Heart right ventricle (tissue), 16 donors: ENCODE measurements at regions of chr22 and their contacts with region 1.

Region 1: GRCh38 chr22:26658671-26659478 is 1.5 kb downstream of the MIAT start:
- DNase-seq: no peak
- ATAC-seq: peak; percentile 20 to 61 (median 44)
- H3K4me3 ChIP-seq: peak overlapping the region in 8 of 10 donors; percentile 2 to 50 (median 30)
- H3K27ac ChIP-seq: peak overlapping the region in 1 of 10 donors; percentile 62
- H3K4me1 ChIP-seq: peaks cover 8 to 27% (median 22%) of the 10 kb centered on the region in 9 donors
- H3K27me3 ChIP-seq: peaks cover 0 to 90% (median 74%) of the 10 kb centered on the region in 7 donors
- CTCF ChIP-seq: no peak

Region 2: DNA sequence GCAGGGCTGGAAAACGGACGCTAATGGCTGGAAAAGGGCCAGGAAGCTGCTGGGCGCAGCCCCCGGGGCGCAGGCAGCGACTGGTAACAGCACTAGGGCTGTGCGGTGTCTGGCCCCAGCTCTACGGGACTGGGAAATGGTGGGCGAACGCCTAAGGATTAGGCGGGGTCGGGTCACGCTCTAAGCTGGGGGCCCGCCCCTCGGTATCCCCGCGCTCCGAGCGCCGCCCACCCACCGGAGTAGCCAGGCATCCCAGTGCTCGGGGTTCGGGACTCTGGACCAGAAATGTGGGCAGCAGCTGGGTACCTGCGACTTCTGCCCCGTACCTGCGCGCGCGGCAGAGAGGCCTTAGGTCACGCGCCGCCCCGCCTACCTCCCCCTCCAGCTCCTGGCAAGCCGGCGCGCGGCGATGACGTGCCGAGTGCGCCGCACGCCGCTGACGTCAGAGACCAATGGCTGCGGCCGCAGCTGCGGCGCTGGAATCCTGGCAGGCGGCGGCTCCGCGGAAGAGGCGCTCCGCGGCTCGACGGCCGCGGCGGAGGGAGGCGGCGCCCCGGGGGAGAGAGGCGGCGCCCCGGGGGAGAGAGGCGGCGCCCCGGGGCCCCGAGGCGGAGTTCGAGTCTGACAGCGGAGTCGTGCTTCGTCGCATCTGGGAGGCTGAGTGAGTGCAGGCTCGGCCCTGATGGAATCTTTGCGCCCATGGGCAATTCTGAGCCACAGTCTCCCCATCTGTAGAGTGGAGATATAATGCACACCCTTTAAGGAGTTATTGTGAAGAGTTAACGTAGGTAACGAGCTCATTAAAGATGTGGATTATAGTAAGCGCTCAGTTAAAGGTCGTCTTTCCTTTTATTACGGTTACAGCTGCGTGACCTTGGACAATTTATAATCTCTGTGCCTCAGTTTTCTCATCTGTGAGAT is 175.2 kb before region 1 on chr22 and contains the starts of genes HPS4 and SRRD:
- intact Hi-C with region 1: loop called in 2 of 10 experiments (anchors 5 to 10 kb)
- DNase-seq: peak; percentile 85 to 91
- ATAC-seq: peak; percentile 94 to 97 (median 96)
- H3K4me3 ChIP-seq: peak within 1 kb of the TSS; percentile 70 to 100 (median 97)
- H3K27ac ChIP-seq: peak within 1 kb of the TSS; percentile 6 to 97 (median 95)
- H3K4me1 ChIP-seq: peaks cover 0 to 66% (median 59%) of the 10 kb centered on the region in 9 donors
- H3K27me3 ChIP-seq: no peaks in the 10 kb centered on the region
- CTCF ChIP-seq: no peak
- total RNA-seq, gene HPS4: 6.6 to 12.0 (median 9.0) TPM
- total RNA-seq, gene SRRD: 19.5 to 26.3 (median 21.2) TPM

Region 3: DNA sequence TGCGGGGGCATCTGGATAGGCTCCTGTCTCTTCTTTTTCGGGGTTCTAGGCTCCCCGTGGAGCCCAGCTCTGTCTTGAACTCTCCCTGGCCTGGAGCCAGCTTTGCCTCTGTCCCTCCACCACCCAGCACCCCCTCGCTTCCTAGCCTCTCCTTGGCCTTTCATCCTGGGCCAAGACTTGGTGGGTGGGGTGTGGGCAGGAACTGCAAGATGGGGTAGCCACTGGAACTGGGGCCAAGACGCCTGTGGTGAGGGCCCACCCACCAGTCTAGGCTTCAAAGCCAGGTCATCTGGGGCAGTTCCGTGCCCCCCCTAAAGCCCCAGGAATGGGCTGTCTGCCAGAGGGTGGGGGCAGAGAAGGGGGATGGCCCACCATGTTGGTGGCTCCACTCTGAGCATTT is 39.4 kb before region 1 on chr22:
- intact Hi-C with region 1: no loop called
- DNase-seq: peak; percentile 34 to 35
- ATAC-seq: peak in 7 of 8 donors; percentile 47 to 80 (median 58)
- H3K4me3 ChIP-seq: no peak overlapping the region
- H3K27ac ChIP-seq: no peak overlapping the region
- H3K4me1 ChIP-seq: peaks cover 0 to 42% (median 10%) of the 10 kb centered on the region in 9 donors
- H3K27me3 ChIP-seq: peaks cover 0 to 22% (median 8%) of the 10 kb centered on the region in 7 donors
- CTCF ChIP-seq: no peak

Region 4: DNA sequence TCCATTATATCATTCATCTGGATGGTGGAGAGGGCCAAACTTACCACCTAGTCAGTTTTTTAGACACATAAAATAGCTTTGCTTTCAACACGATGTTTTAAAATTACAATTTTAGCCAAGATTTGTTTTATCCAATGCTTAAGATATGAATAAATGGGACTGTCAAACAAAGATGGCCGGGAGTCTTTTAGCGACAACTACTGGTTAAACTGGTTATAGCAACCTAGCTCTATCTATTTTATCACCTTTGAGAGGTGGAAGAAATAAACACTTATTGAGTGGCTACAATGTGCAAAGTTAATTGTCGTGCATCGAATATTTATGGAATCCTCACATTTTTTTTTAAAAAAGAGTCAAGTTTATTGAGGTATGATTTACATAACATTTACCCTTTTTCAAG is 278.3 kb after region 1 on chr22:
- intact Hi-C with region 1: no loop called
- DNase-seq: no peak
- ATAC-seq: no peak
- H3K4me3 ChIP-seq: no peak overlapping the region
- H3K27ac ChIP-seq: no peak overlapping the region
- H3K4me1 ChIP-seq: no peaks in the 10 kb centered on the region
- H3K27me3 ChIP-seq: peaks cover 0 to 9% (median 0%) of the 10 kb centered on the region in 7 donors
- CTCF ChIP-seq: no peak